GM12878 (cell line): ENCODE measurements at regions of chr3 and their contacts with region 1.

Region 1: GRCh38 chr3:16511681-16512434 is 1.6 kb downstream of the RFTN1 start:
- DNase-seq: peak; percentile 98
- ATAC-seq: peak; percentile 48
- H3K4me3 ChIP-seq: peak overlapping the region; percentile 86
- H3K27ac ChIP-seq: peak overlapping the region; percentile 92
- H3K4me1 ChIP-seq: peaks cover 37% of the 10 kb centered on the region
- H3K27me3 ChIP-seq: no peaks in the 10 kb centered on the region
- CTCF ChIP-seq: peak in 1 of 3 experiments; percentile 0; a peak in 1 of 6 replicates
- EP300 ChIP-seq: peak; percentile 99
- POLR2A ChIP-seq: peak; percentile 64
- RAD21 ChIP-seq: peak; percentile 8; the same call in 1 of the 2 replicates

Region 2: DNA sequence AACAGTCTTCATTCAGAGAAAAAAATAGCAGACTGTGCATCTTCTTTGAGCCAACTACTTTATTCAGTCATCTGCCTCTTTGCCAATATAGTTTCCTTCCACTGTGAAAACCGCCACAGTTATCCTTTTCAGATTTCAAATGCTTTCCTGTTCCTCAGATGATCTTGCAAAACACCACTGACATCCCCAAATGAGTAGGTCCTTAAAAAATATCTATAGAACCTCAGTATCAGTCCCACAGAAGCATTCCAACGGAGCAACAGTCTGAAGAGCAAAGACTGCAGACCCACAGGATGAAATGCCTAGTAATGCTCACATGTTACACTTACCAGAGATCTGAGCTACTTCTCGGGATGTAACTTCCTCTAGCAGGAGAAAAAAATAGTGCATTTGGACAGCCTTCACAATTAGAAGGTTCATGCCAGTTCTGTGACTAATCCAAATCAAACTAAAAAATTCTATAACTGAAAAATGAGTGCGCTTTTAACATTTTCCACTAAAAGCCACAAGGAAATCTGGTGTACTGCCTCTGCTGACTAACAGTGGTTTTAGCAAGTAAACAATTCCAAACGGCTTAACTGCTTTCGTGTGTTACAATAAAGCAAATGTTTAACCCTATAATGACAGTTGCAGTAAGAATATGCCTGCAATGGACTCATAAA is 714.1 kb before region 1 on chr3 and contains the start of gene ANKRD28:
- CTCF ChIA-PET with region 1: no interaction called
- POLR2A ChIA-PET with region 1: no interaction called
- RAD21 ChIA-PET with region 1: interaction called, 3 read pairs
- SMC1A ChIA-PET with region 1: no interaction called
- in situ Hi-C with region 1: loop called (anchors 5 kb)
- intact Hi-C with region 1: loop called (anchors 5 kb)
- DNase-seq: no peak
- ATAC-seq: peak; percentile 32
- H3K4me3 ChIP-seq: peak within 1 kb of the TSS; percentile 73
- H3K27ac ChIP-seq: peak within 1 kb of the TSS; percentile 94
- H3K4me1 ChIP-seq: peaks cover 27% of the 10 kb centered on the region; the same call in 1 of the 2 replicates
- H3K27me3 ChIP-seq: no peaks in the 10 kb centered on the region
- CTCF ChIP-seq: peak; percentile 7 to 25 (median 14); a peak in 1 of 6 replicates
- EP300 ChIP-seq: peak in 1 of 2 experiments; percentile 64; a peak in 1 of 4 replicates
- POLR2A ChIP-seq: 0 out of 2 replicates have a peak, but pooled peaks have one; percentile 32
- RAD21 ChIP-seq: no peak
- polyA plus RNA-seq, gene ANKRD28: 12.3 to 13.7 TPM

Region 3: DNA sequence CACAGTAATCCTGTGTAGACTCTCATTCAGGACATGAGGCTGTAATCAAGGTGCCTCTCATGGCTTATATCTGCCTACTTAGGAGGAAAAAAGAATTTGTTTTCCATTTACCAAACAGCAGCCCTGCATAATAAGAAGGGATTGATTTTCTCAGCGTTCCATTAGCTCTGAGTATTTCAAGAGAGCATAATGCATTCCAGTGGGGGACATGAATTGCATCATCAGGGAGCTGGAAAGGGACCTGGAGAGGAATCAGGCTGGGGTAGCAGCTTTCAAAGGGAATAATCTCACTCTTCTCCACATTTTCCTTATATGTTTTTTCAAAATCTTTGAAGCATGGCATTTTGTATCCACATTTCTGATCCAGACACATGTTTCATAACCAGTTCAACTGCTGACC is 563.5 kb before region 1 on chr3:
- CTCF ChIA-PET with region 1: no interaction called
- POLR2A ChIA-PET with region 1: no interaction called
- RAD21 ChIA-PET with region 1: no interaction called
- SMC1A ChIA-PET with region 1: no interaction called
- in situ Hi-C with region 1: no loop called
- intact Hi-C with region 1: no loop called
- DNase-seq: no peak
- ATAC-seq: no peak
- H3K4me3 ChIP-seq: no peak overlapping the region
- H3K27ac ChIP-seq: no peak overlapping the region
- H3K4me1 ChIP-seq: no peaks in the 10 kb centered on the region
- H3K27me3 ChIP-seq: no peaks in the 10 kb centered on the region
- CTCF ChIP-seq: no peak
- EP300 ChIP-seq: no peak
- POLR2A ChIP-seq: no peak
- RAD21 ChIP-seq: no peak

Region 4: GRCh38 chr3:16300881-16301359 is 210.9 kb before region 1 on chr3:
- CTCF ChIA-PET with region 1: interaction called, 3 read pairs
- POLR2A ChIA-PET with region 1: interaction called, 3 read pairs
- RAD21 ChIA-PET with region 1: interaction called, 12 read pairs
- SMC1A ChIA-PET with region 1: interaction called, 8 read pairs
- in situ Hi-C with region 1: no loop called
- intact Hi-C with region 1: no loop called
- DNase-seq: peak; percentile 48
- ATAC-seq: peak; percentile 75
- H3K4me3 ChIP-seq: no peak overlapping the region
- H3K27ac ChIP-seq: peak overlapping the region; percentile 33
- H3K4me1 ChIP-seq: peaks cover 20% of the 10 kb centered on the region
- H3K27me3 ChIP-seq: no peaks in the 10 kb centered on the region
- CTCF ChIP-seq: no peak
- EP300 ChIP-seq: no peak
- POLR2A ChIP-seq: no peak
- RAD21 ChIP-seq: no peak

Region 5: DNA sequence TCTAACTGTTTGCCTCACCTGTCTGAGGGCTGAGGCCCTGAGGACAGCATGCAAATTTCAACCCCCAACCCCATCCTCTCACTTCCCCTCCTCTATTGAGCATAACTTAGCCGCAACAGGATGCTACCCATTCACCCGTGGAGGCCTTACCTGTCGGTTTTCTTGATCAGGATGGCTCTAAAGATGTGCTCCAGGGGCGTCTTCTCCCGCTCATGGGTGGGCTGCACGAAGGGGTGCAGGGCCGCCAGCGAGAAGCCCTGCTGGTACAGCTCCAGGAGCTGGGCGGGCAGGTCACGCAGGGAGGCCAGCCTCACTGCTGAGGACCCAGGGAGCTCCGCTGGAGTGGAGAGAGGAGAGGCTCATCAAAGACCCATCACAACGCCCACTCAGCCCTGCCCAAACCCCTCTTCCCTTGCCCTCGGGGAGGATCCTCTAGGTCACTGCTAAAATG is 78.1 kb before region 1 on chr3:
- CTCF ChIA-PET with region 1: interaction called, 4 read pairs
- POLR2A ChIA-PET with region 1: interaction called, 12 read pairs
- RAD21 ChIA-PET with region 1: interaction called, 74 read pairs
- SMC1A ChIA-PET with region 1: interaction called, 175 read pairs
- in situ Hi-C with region 1: no loop called
- intact Hi-C with region 1: loop called (anchors 1 kb)
- DNase-seq: peak; percentile 74
- ATAC-seq: peak; percentile 89
- H3K4me3 ChIP-seq: no peak overlapping the region; the same call in 1 of the 2 replicates
- H3K27ac ChIP-seq: peak overlapping the region; percentile 59
- H3K4me1 ChIP-seq: peaks cover 39% of the 10 kb centered on the region
- H3K27me3 ChIP-seq: no peaks in the 10 kb centered on the region
- CTCF ChIP-seq: no peak
- EP300 ChIP-seq: peak; percentile 80 to 95
- POLR2A ChIP-seq: no peak
- RAD21 ChIP-seq: no peak; the same call in 1 of the 2 replicates

Region 6: DNA sequence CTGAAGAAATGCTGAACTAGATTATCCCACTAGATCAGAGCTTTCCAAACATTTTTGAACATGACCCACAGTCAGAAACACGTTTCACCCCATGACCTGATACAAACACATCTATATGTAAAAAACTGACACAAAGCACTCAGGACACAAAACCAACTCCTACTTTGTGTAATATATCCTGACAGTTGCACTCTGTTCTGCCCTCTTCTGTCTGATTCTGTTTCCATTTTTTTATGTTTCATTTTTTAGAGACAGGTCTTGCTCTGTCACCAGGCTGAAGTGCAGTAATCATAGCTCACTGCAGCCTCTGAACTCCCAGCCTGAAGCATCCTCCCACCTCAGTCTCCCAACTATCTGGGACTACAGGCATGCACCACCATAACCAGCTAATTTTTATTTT is 17.4 kb after region 1 on chr3:
- CTCF ChIA-PET with region 1: interaction called, 15 read pairs
- POLR2A ChIA-PET with region 1: interaction called, 22 read pairs
- RAD21 ChIA-PET with region 1: interaction called, 15 read pairs
- SMC1A ChIA-PET with region 1: interaction called, 36 read pairs
- in situ Hi-C with region 1: no loop called
- intact Hi-C with region 1: no loop called
- DNase-seq: no peak
- ATAC-seq: peak; percentile 72
- H3K4me3 ChIP-seq: no peak overlapping the region
- H3K27ac ChIP-seq: no peak overlapping the region
- H3K4me1 ChIP-seq: no peaks in the 10 kb centered on the region
- H3K27me3 ChIP-seq: no peaks in the 10 kb centered on the region
- CTCF ChIP-seq: peak in 2 of 3 experiments; percentile 22 to 24; a peak in 3 of 6 replicates
- EP300 ChIP-seq: no peak
- POLR2A ChIP-seq: no peak
- RAD21 ChIP-seq: peak; percentile 49

Region 7: DNA sequence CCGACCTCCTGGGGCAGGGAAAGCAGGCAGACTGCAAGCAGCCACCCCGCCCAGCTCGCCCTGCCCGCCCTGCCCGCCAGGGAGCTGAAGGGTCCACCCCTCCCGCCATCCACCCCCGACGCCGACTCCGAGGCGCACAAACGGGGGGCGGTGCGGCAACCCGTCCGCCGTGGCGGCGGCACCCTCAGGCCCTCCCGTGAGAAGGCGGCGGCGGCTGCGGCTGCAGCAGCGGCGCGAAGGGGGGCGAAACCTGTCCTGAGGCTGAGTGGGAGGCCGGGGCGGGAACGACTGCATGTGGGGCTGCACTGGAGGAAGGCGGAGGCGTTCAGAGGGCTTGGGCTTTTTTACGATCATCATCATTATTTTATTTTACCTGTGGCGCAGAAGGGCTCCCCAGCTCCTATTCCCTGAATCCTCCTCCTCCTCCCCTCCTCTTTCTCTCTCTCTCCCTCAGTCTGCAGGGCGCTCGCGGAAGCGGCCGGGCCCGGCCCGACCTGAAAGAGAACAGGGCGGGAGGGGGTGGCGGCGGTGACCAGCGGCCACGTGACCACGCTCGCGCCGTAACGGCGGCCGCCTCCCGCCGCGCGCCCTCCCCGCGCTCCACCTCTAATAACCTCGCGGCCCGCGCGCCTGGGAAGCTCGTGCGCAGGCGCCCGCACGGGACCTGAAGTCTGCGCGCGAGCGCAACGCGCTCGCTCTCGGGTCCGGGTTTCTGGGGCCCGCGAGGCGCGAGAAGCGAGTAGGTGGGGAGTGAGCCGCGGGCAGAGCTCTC is 1230.4 kb after region 1 on chr3 and contains the start of gene TBC1D5:
- CTCF ChIA-PET with region 1: no interaction called
- POLR2A ChIA-PET with region 1: no interaction called
- RAD21 ChIA-PET with region 1: no interaction called
- SMC1A ChIA-PET with region 1: no interaction called
- in situ Hi-C with region 1: loop called (anchors 10 kb)
- intact Hi-C with region 1: loop called (anchors 10 kb)
- DNase-seq: peak; percentile 91
- ATAC-seq: peak; percentile 82
- H3K4me3 ChIP-seq: peak within 1 kb of the TSS; percentile 94
- H3K27ac ChIP-seq: peak within 1 kb of the TSS; percentile 94
- H3K4me1 ChIP-seq: peaks cover 13% of the 10 kb centered on the region
- H3K27me3 ChIP-seq: no peaks in the 10 kb centered on the region
- CTCF ChIP-seq: peak in 1 of 3 experiments; percentile 6; a peak in 1 of 6 replicates
- EP300 ChIP-seq: no peak
- POLR2A ChIP-seq: peak; percentile 90
- RAD21 ChIP-seq: no peak
- polyA plus RNA-seq, gene TBC1D5: 5.5 to 5.8 TPM